Heart left ventricle (tissue), 16 donors: ENCODE measurements at regions of chr2 and their contacts with region 1.

Region 1: DNA sequence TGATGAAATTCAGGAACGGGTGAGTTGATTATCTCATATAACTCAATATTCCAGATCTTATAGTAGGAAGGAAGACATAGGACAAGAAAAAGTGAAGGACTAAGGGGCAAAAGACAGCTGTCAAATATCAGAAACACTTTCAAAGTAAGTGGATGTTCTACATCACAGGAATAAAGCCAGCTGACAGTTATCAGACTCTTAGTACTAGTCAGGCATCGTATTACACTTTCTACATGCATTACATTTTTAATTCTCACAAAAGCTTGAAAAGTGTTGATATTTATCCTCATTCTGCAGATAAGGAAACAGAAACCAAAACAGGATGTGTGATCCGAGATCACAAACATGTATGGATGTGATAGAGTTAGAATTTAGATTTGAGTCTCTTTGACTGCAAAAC is 63.4 kb downstream of the DNAH6 start:
- DNase-seq: no peak
- ATAC-seq: no peak
- H3K4me3 ChIP-seq: no peak overlapping the region
- H3K27ac ChIP-seq: no peak overlapping the region
- H3K4me1 ChIP-seq: peaks cover 0 to 4% (median 0%) of the 10 kb centered on the region in 12 donors
- H3K27me3 ChIP-seq: no peaks in the 10 kb centered on the region
- CTCF ChIP-seq: no peak
- POLR2A ChIP-seq: no peak

Region 2: DNA sequence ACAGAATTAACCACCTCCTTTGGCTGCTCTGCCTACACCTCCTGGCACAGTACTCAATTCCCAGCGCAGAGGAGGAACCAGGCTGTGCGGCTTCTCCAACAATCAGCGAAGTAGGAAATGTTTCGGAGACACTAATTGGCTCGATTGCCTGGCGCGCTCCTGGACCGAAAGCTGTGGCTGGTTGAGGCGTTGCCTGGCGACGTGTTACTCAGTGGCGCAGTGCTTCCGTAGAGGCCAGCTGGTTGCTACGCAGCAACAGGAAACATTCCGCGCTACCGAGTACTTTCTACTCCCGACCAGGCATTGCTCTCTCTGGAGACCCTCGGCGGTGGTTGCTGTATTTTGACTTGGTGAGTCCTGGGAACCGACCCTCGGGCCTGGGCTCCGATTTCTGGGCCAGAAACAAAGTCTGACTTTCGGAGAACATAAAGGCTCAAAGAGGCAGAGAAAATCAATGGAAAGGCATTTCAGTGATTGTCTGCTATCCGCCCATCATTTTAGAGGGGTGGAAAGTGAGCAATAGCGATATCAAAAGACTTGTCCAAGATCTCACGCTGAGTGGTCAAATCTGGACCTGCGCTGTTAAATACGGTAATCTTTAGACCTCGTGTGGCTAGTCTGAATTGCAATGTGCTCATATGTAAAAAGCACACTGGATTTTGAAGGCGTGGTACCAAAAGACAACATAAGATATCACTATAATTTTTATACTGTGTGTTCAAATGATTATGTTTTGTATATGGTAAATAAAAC is 63.3 kb before region 1 on chr2 and contains the start of gene DNAH6:
- intact Hi-C with region 1: loop called in 1 of 10 experiments (anchors 2 kb)
- DNase-seq: peak; percentile 92 to 95 (median 93)
- ATAC-seq: peak; percentile 99 to 100 (median 100)
- H3K4me3 ChIP-seq: peak within 1 kb of the TSS; percentile 12 to 66 (median 52)
- H3K27ac ChIP-seq: peak within 1 kb of the TSS in 2 of 12 donors; percentile 11 to 15
- H3K4me1 ChIP-seq: peaks cover 0 to 10% (median 4%) of the 10 kb centered on the region in 12 donors
- H3K27me3 ChIP-seq: no peaks in the 10 kb centered on the region
- CTCF ChIP-seq: no peak
- POLR2A ChIP-seq: no peak
- total RNA-seq, gene DNAH6: 0.05 to 0.75 (median 0.13) TPM in 7 of 9 donors, not detected in the others

Region 3: DNA sequence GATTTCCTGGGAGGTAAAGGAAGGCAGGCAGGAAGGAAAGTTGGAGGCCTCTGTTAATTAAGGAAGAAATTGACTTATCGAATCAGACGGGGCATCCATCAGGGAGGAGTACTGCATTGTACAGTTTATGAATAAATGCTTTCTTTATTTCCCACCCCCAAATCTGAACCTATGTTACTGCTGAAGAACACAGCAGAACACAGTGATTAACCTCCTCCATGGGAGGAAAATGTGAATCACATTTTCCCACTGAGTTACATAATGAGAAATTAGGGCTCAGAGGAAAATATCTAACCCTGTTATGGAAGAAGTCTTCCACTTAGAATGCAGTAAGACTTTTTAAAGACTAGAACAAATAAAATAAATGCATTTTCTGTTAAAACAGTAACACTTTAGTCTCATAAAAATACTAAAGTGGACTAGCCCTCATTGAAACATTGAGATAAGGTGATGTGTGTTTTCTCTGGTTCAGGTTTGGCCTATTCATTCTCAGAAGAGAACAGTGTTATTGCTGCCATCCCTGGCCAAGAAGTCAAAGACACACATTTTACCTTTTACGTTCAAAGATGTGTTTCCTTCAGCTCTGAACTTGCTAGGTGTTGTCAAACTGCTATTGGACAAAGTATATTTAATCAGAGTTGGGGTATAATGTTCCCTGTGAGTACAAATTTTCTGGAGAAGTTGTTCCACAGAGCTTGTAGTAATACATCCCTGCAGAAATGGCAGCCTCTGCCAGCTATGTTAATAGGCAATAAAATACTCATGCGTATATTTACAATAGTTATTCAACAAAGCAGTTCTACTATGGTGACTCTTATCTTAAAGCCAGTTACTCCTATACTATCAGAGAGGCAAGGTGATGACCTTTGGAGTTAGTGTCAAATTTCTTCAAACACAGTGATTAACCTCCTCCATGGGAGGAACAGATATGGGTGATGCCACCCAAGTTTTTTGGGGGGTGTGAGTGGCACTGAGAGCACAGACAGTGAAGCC is 52.2 kb before region 1 on chr2:
- intact Hi-C with region 1: no loop called
- DNase-seq: no peak
- ATAC-seq: no peak
- H3K4me3 ChIP-seq: no peak overlapping the region
- H3K27ac ChIP-seq: peak overlapping the region in 1 of 12 donors; percentile 0
- H3K4me1 ChIP-seq: peaks cover 0 to 12% (median 0%) of the 10 kb centered on the region in 12 donors
- H3K27me3 ChIP-seq: no peaks in the 10 kb centered on the region
- CTCF ChIP-seq: no peak
- POLR2A ChIP-seq: no peak

Region 4: GRCh38 chr2:84925724-84926376 is 346.2 kb after region 1 on chr2:
- intact Hi-C with region 1: no loop called
- DNase-seq: peak; percentile 94 to 97 (median 95)
- ATAC-seq: peak; percentile 77 to 89 (median 85)
- H3K4me3 ChIP-seq: peak overlapping the region in 10 of 12 donors; percentile 27 to 60 (median 39)
- H3K27ac ChIP-seq: peak overlapping the region in 11 of 12 donors; percentile 38 to 94 (median 85)
- H3K4me1 ChIP-seq: peaks cover 0 to 37% (median 20%) of the 10 kb centered on the region in 12 donors
- H3K27me3 ChIP-seq: no peaks in the 10 kb centered on the region
- CTCF ChIP-seq: peak; percentile 95 to 99 (median 98)
- POLR2A ChIP-seq: no peak